ENCODE measurements at regions of chr6 and their contacts with region 1.

Region 1: DNA sequence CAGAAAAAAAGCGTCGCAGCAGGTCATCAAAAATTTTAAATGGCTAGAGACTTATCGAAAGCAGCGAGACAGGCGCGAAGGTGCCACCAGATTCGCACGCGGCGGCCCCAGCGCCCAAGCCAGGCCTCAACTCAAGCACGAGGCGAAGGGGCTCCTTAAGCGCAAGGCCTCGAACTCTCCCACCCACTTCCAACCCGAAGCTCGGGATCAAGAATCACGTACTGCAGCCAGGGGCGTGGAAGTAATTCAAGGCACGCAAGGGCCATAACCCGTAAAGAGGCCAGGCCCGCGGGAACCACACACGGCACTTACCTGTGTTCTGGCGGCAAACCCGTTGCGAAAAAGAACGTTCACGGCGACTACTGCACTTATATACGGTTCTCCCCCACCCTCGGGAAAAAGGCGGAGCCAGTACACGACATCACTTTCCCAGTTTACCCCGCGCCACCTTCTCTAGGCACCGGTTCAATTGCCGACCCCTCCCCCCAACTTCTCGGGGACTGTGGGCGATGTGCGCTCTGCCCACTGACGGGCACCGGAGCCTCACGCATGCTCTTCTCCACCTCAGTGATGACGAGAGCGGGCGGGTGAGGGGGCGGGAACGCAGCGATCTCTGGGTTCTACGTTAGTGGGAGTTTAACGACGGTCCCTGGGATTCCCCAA is at the start of gene EEF1A1:
- DNase-seq: peak; percentile 99 to 100
- H3K4me3 ChIP-seq: peak within 1 kb of the TSS; percentile 81 to 96
- H3K27ac ChIP-seq: peak within 1 kb of the TSS; percentile 99
- H3K4me1 ChIP-seq: peaks cover 0 to 4% of the 10 kb centered on the region in 2 donors
- H3K27me3 ChIP-seq: no peaks in the 10 kb centered on the region
- CTCF ChIP-seq: peak in 2 of 4 experiments; percentile 24 to 30
- POLR2A ChIP-seq: peak; percentile 98
- total RNA-seq, gene EEF1A1: 11,501 to 26,048 (median 13,655) TPM

Region 2: GRCh38 chr6:73194744-73195143 is 326.1 kb before region 1 on chr6:
- intact Hi-C with region 1: no loop called
- DNase-seq: no peak
- H3K4me3 ChIP-seq: no peak overlapping the region
- H3K27ac ChIP-seq: no peak overlapping the region
- H3K4me1 ChIP-seq: no peaks in the 10 kb centered on the region
- H3K27me3 ChIP-seq: no peaks in the 10 kb centered on the region
- CTCF ChIP-seq: no peak
- POLR2A ChIP-seq: no peak

Region 3: DNA sequence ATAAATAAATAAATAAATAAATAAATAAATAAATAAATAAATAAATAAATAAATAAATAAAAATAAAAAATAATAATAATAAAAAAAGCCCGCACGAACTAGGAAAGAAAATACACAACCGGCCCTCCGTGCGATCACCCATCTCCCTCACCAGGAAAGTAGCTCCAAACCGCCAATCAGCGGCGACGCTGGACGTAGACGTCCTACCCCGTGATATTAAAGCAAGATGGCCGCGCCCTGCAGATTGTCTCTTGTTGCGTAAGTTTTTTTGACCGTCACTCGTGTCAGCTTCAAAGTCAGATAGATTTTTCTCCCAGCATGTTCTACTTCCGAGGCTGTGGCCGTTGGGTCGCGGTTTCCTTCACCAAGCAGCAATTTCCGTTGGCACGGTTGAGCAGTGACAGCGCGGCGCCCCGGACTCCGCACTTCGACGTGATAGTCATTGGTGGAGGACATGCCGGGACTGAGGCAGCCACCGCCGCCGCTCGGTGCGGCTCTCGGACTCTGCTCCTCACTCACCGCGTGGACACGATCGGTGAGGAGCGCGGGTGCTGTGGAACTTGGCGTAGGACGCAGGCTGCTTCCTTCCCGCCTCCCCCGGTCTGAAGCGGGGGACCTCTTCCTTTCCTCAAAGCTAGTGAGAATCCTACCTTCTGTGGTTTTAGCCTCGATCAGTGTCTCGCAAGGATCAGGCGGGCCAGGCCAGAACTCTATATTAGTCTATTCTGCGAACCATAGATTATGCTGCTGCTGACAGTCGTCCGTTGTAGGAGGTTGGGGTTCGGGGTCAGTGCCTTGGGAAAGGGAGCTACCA is 59.1 kb before region 1 on chr6 and contains the start of gene MTO1:
- intact Hi-C with region 1: loop called (anchors 10 kb)
- DNase-seq: peak; percentile 82 to 86
- H3K4me3 ChIP-seq: peak within 1 kb of the TSS; percentile 88 to 99
- H3K27ac ChIP-seq: peak within 1 kb of the TSS; percentile 90 to 96
- H3K4me1 ChIP-seq: peaks cover 7 to 8% of the 10 kb centered on the region in 2 donors
- H3K27me3 ChIP-seq: no peaks in the 10 kb centered on the region
- CTCF ChIP-seq: no peak
- POLR2A ChIP-seq: peak; percentile 38 to 64
- total RNA-seq, gene MTO1: 13.3 to 38.3 (median 26.8) TPM